ENCODE measurements at regions of chr16 and their contacts with region 1.

Region 1: GRCh38 chr16:1054660-1055556 is 17.6 kb upstream of the SSTR5 start:
- DNase-seq: no peak
- H3K4me3 Mint-ChIP-seq: no peak overlapping the region
- H3K27ac Mint-ChIP-seq: no peak overlapping the region
- H3K4me1 Mint-ChIP-seq: no peaks in the 10 kb centered on the region
- H3K27me3 Mint-ChIP-seq: no peaks in the 10 kb centered on the region

Region 2: GRCh38 chr16:813204-813915 is 241.5 kb before region 1 on chr16:
- intact Hi-C with region 1: loop called (anchors 5 kb)
- DNase-seq: peak; percentile 21
- H3K4me3 Mint-ChIP-seq: no peak overlapping the region
- H3K27ac Mint-ChIP-seq: no peak overlapping the region
- H3K4me1 Mint-ChIP-seq: peaks cover 4% of the 10 kb centered on the region
- H3K27me3 Mint-ChIP-seq: peaks cover 16% of the 10 kb centered on the region

Region 3: GRCh38 chr16:982145-983043 is 72.5 kb before region 1 on chr16:
- intact Hi-C with region 1: no loop called
- DNase-seq: no peak
- H3K4me3 Mint-ChIP-seq: peak overlapping the region; percentile 54
- H3K27ac Mint-ChIP-seq: no peak overlapping the region
- H3K4me1 Mint-ChIP-seq: no peaks in the 10 kb centered on the region
- H3K27me3 Mint-ChIP-seq: peaks cover 9% of the 10 kb centered on the region

Region 4: GRCh38 chr16:1003391-1004347 is 51.2 kb before region 1 on chr16:
- intact Hi-C with region 1: no loop called
- DNase-seq: peak; percentile 29
- H3K4me3 Mint-ChIP-seq: peak overlapping the region; percentile 11
- H3K27ac Mint-ChIP-seq: no peak overlapping the region
- H3K4me1 Mint-ChIP-seq: peaks cover 11% of the 10 kb centered on the region
- H3K27me3 Mint-ChIP-seq: peaks cover 18% of the 10 kb centered on the region

Region 5: GRCh38 chr16:1093284-1094123 is 38.6 kb after region 1 on chr16:
- intact Hi-C with region 1: no loop called
- DNase-seq: no peak
- H3K4me3 Mint-ChIP-seq: no peak overlapping the region
- H3K27ac Mint-ChIP-seq: no peak overlapping the region
- H3K4me1 Mint-ChIP-seq: no peaks in the 10 kb centered on the region
- H3K27me3 Mint-ChIP-seq: no peaks in the 10 kb centered on the region

Measured in activated T-helper 1 cell treated with anti-CD3 and anti-CD28 coated beads, Interleukin-12 subunit alpha, Interleukin-12 subunit beta, Interleukin-2, Interleukin-4 antibody, amounts not matched to agents 30 ng/mL and 10 ng/mL and 1 ng/mL, durations not matched to agents 14 hours and 24 hours and 36 hours (primary cell).